ENCODE measurements at regions of chr3 and their contacts with region 1.

Region 1: DNA sequence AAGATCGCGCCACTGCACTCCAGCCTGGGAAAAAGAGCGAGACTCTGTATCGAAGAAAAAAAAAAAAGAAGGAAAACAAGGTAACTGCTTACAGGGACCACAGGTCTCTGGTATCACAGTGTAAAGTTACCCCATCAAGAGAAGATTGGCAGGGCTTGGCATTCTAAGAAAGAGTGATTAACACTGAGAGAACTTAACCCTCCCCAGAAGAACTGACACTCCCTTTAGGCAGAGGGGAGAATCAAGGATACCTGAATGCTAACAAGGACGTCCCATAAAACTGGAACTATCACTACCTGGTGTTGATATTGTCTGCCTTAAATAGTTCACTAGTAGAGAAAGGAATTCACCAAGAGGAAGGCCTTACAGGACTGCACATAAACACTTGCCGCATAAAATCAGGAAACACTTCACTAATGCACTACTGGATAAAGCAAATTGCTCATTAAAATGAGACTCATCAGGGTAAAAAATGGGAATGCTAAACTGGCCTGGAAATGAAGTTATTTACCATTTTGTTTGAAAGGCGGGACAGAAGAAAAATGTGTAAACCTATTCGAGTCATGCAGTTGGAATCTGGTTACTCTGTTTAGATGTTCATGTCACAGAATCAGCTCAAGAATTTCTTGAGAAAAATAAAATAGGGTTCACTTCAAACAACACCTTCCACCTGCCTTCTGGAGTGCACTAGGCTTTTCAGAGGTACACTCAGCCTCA is 121.6 kb downstream of the FOXP1 start:
- DNase-seq: no peak
- H3K4me3 Mint-ChIP-seq: no peak overlapping the region
- H3K27ac Mint-ChIP-seq: no peak overlapping the region
- H3K4me1 Mint-ChIP-seq: peaks cover 28% of the 10 kb centered on the region
- H3K27me3 Mint-ChIP-seq: peaks cover 3% of the 10 kb centered on the region

Region 2: DNA sequence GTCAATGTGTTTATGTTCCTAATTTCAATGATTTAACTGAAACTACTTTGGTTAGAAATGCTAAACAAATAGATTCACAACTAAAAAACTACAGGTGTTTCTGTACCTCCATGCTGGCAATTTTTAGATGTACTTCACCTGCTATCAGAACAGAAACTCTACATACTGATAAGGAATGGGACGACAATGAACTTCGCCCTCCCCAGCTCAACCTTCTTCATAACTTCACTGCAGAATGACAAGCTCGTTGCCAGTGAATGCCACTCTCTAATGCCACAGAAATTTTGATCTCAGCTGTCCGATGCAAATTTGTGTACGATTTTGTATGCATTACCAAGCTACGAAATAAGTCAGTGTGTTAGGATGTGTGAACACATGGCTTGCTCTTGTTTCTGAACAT is 11.7 kb before region 1 on chr3:
- CTCF ChIA-PET with region 1: interaction called, 13 read pairs
- POLR2A ChIA-PET with region 1: no interaction called
- DNase-seq: no peak
- H3K4me3 Mint-ChIP-seq: no peak overlapping the region
- H3K27ac Mint-ChIP-seq: peak overlapping the region; percentile 58
- H3K4me1 Mint-ChIP-seq: peaks cover 93% of the 10 kb centered on the region
- H3K27me3 Mint-ChIP-seq: no peaks in the 10 kb centered on the region